ENCODE measurements at regions of chr14 and their contacts with region 1.

Region 1: GRCh38 chr14:105314287-105315200 is at the start of gene PACS2:
- DNase-seq: peak; percentile 46
- ATAC-seq: peak; percentile 50
- H3K4me3 ChIP-seq: peak within 1 kb of the TSS; percentile 55 to 94 (median 87)
- H3K27ac ChIP-seq: peak within 1 kb of the TSS; percentile 23
- H3K4me1 ChIP-seq: peaks cover 24% of the 10 kb centered on the region
- H3K27me3 ChIP-seq: no peaks in the 10 kb centered on the region
- CTCF ChIP-seq: no peak
- EP300 ChIP-seq: no peak
- POLR2A ChIP-seq: peak in 1 of 2 experiments; percentile 59; a peak in 2 of 4 replicates
- RAD21 ChIP-seq: no peak
- total RNA-seq, gene PACS2: 14.6 and 23.6 TPM in 2 replicates

Region 2: DNA sequence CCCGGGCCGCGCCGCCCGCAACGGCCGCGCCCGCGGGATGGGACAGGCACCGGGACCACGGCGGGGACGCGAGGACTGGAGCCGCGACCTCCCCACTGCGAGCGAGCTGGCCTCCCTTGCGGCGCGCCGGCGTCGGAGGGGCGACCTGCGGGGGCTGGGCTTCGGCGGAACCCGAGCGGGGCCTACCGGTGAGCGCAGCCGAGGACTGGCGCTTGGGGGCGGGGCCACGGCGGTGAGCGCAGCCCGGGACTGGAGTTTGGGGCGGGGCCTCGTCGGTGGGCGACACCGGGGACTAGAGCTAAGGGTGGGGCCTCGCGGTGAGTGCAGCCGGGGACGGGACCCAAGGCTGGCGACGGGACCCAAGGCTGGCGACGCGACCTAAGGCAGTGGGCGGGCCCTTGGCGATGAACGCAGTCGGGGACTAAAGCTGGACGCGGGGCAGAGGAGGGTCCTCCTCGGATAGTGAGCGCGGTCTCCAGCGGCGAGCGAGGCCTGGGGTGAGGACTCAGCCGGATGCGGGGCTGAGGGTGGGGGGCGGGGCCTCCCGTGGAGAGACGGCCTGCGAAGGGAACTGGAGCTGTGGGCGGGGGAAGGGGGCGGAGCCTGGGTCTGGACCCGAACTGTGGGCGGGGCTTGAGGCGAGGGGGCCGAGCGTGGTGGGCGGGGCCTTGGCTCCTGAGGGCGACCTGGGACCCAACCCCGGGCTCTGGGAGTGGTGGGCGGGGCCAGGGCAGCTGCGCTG is 13.6 kb before region 1 on chr14 and contains the start of gene BRF1:
- CTCF ChIA-PET with region 1: no interaction called
- POLR2A ChIA-PET with region 1: interaction called, 34 read pairs
- in situ Hi-C with region 1: no loop called
- intact Hi-C with region 1: no loop called
- DNase-seq: peak; percentile 90
- ATAC-seq: peak; percentile 90
- H3K4me3 ChIP-seq: peak within 1 kb of the TSS; percentile 68 to 99 (median 92)
- H3K27ac ChIP-seq: peak within 1 kb of the TSS; percentile 95
- H3K4me1 ChIP-seq: peaks cover 36% of the 10 kb centered on the region
- H3K27me3 ChIP-seq: no peaks in the 10 kb centered on the region; a peak in 1 of 5 replicates
- CTCF ChIP-seq: no peak
- EP300 ChIP-seq: no peak
- POLR2A ChIP-seq: peak; percentile 73 to 76; a peak in 3 of 4 replicates
- RAD21 ChIP-seq: peak; percentile 40
- total RNA-seq, gene BRF1: 6.4 and 11.0 TPM in 2 replicates

Region 3: GRCh38 chr14:105351920-105352851 is 37.6 kb after region 1 on chr14:
- CTCF ChIA-PET with region 1: no interaction called
- POLR2A ChIA-PET with region 1: no interaction called
- in situ Hi-C with region 1: no loop called
- intact Hi-C with region 1: loop called (anchors 2 kb)
- DNase-seq: peak; percentile 85
- ATAC-seq: peak; percentile 90
- H3K4me3 ChIP-seq: no peak overlapping the region
- H3K27ac ChIP-seq: peak overlapping the region; percentile 28
- H3K4me1 ChIP-seq: peaks cover 5% of the 10 kb centered on the region
- H3K27me3 ChIP-seq: no peaks in the 10 kb centered on the region
- CTCF ChIP-seq: peak; percentile 98
- EP300 ChIP-seq: no peak
- POLR2A ChIP-seq: no peak
- RAD21 ChIP-seq: peak; percentile 90

Measured in HepG2 (cell line).